ENCODE measurements at regions of chr1 and their contacts with region 1.

Region 1: DNA sequence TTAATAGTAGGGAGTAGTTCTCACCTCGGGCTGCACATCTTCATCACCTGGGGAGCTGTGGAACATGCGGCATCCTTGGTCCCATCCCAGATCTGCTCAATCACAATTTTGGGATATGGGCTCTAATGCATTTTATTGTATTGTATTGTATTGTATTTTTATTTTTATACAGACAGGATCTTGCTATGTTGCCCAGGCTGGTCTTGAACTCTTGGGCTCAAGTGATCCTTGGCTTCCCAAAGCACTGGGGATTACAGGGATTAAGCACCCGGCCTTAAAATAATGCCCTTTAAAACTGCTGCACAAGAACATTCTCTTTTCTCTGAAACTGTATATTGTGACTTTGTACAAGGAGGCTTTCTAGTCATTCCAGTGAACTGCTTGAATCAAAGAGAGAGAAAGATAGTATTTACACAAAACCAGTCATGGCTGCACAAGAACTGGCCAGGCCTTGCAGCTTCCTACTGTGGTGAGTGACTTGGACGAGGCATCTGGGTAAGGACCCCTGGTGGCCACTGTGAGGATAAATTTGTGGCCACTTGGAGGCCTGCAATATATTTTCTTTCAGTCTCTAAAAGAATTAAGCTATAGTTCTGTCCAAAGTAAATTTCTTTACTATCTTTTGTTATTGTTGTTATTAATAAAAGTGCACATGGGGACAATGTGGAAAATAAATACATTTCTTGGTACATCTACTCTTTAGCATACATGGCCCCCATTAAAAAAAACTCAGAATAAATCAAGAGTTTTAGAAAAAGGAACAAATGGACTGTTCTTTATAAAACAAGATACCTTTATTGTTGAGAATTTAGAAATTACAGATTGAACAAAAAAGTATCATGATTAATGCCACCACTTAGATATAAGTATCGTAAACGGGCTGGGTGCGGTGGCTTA is 48.0 kb downstream of the TBCE start:
- DNase-seq: peak; percentile 57
- H3K4me3 ChIP-seq: no peak overlapping the region
- H3K27ac ChIP-seq: no peak overlapping the region
- H3K27me3 ChIP-seq: no peaks in the 10 kb centered on the region
- CTCF ChIP-seq: peak; percentile 78

Region 2: DNA sequence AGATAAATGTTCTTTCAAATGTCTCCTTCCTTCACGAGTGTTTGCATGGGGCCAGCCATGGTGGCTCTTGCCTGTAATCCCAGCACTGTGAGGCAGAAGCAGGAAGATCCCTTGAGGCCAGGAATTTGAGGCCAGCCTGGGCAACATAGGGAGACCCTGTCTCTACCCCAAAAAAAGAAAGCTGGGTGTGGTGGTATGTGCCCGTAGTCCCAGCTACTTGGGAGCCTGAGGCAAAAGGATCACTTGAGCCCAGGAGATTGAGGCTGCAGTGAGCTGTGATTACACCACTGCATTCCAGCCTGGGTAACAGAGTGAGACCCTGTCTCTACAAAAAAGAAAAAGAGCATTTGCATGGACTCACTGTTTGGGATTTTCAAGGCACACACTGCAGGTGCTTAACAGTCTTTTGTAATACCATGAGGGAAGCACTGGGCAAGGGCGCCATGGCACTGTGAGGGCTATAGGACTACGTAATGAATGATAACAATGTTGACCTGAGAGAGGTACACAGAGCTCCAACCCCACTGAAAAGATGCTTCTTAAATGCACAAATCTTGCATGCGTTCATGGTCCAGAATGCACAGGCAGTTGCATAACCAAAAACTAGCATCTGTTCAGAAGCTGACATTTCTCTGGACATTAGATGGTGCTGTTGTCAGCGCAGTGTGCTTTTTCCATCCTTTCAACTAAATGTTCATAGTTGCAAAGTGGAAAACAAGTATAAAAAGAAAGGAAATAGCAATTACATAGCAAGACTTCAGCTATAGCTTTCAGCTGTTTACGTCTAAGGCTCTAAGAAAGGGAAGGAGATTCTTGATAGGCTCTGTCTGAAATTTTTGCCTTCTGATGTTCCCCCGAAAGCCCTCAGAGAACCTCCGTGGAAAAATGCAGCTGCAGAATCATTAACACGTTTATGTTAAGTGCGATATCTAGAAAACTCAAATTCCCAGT is 928.5 kb before region 1 on chr1:
- CTCF ChIA-PET with region 1: interaction called, 15 read pairs
- POLR2A ChIA-PET with region 1: no interaction called
- DNase-seq: peak; percentile 77
- H3K4me3 ChIP-seq: no peak overlapping the region
- H3K27ac ChIP-seq: peak overlapping the region; percentile 41
- H3K27me3 ChIP-seq: peaks cover 2% of the 10 kb centered on the region
- CTCF ChIP-seq: peak; percentile 81

Region 3: DNA sequence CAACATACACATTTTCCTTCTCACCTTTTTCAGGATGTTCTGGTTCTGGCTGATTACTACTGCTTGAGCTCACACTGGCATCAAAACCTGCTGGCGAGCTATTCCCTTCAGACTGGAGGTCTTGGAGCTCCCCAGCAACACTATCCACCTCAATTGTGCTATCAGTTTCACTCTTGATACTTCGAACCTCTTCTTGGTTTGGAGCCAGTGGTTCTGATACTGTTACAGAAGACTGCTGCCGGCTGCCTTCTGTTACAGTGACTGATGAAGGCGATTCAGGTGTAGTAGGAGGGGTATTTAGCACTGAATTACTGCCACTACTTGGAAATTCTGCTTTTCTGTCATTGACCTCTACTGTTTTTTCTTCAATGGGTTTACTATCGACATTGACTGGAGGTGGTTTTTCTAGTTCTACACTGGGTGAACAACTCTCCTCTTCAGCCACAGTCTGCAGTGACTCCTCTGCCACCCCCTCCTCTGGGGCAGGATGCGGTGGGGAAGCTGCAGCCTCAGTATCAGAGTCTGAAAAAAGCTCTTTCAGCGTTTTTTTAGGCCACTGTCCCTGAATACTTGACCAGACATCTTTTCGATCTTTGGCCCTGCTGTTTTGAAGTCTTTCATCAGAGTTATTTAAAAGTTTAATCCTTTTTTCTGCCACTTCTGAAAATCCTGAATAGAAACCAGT is 233.6 kb before region 1 on chr1:
- CTCF ChIA-PET with region 1: interaction called, 10 read pairs
- POLR2A ChIA-PET with region 1: no interaction called
- DNase-seq: no peak
- H3K4me3 ChIP-seq: no peak overlapping the region
- H3K27ac ChIP-seq: no peak overlapping the region
- H3K27me3 ChIP-seq: no peaks in the 10 kb centered on the region
- CTCF ChIP-seq: no peak

Region 4: GRCh38 chr1:235239851-235240250 is 175.4 kb before region 1 on chr1:
- CTCF ChIA-PET with region 1: interaction called, 30 read pairs
- POLR2A ChIA-PET with region 1: no interaction called
- DNase-seq: no peak
- H3K4me3 ChIP-seq: no peak overlapping the region
- H3K27ac ChIP-seq: no peak overlapping the region
- H3K27me3 ChIP-seq: no peaks in the 10 kb centered on the region
- CTCF ChIP-seq: no peak

Region 5: DNA sequence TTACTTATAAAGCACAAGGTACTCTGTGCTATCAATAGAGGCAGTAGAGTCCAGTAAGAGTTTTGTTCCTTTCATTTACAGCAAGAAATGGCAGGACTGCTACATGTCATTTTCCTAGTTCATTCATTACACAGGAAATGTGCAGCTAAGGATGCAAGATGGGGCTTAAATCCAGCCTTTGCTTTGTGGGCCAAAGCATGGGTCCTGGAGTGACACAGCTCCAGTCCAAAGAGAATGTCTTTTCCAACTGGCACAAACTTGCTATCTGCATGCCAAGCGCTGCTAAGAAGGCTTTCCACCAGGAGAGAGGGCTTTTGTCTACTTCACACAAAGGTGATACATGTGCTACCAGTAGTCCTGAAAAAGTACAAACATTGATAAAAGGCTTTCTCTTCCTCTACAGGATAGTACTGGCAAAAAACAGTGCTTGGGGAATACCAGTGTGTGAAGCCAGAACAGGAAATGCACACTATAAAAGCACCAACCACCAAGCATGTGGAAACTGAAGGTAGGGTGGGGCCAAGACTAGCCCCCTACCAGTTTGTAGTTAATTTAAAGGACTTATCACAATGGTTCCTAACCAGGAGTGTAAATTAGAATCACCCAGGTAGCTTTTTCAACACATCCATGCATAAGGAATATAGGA is 156.0 kb before region 1 on chr1:
- CTCF ChIA-PET with region 1: interaction called, 61 read pairs
- POLR2A ChIA-PET with region 1: no interaction called
- DNase-seq: no peak
- H3K4me3 ChIP-seq: no peak overlapping the region
- H3K27ac ChIP-seq: no peak overlapping the region
- H3K27me3 ChIP-seq: no peaks in the 10 kb centered on the region
- CTCF ChIP-seq: no peak

Region 6: DNA sequence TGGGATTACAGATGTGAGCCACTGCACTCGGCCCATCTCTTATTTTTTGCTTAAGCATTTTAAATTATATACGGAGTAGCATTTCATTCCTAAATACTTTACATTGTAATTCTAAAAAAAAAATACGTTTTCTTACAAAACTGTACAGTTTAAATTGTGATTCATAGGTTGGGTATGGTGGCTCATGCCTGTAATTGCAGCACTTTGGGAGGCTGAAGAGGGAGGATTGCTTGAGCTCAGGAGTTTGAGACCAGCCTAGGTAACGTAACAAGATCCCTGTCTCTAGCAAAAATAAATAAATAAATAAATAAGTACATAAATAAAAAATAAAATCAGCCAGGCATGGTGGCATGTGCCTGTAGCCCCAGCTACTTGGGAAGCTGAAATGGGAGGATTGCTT is 23.4 kb before region 1 on chr1:
- CTCF ChIA-PET with region 1: interaction called, 35 read pairs
- POLR2A ChIA-PET with region 1: interaction called, 5 read pairs
- DNase-seq: no peak
- H3K4me3 ChIP-seq: no peak overlapping the region
- H3K27ac ChIP-seq: no peak overlapping the region
- H3K27me3 ChIP-seq: no peaks in the 10 kb centered on the region
- CTCF ChIP-seq: no peak

Region 7: DNA sequence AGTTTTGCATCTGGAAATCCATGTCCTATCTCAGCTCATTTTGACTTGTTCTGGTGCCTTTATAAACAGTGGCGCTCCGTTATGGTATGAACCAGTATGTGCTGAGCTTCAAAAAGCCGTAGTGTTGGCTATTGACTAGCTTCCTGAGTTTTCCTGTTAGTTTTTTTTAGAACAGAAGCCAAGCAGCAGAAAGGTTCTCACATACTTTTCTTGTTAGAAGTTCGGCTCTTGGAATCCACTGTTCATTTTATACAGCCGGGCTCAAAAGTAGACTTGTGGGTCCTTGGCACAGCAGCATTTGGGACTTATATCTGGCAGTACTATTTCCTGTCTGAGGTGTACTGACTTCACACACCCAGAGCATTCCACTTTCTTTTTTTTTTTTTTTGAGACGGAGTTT is 15.7 kb after region 1 on chr1:
- CTCF ChIA-PET with region 1: interaction called, 34 read pairs
- POLR2A ChIA-PET with region 1: no interaction called
- DNase-seq: no peak
- H3K4me3 ChIP-seq: no peak overlapping the region
- H3K27ac ChIP-seq: no peak overlapping the region
- H3K27me3 ChIP-seq: no peaks in the 10 kb centered on the region
- CTCF ChIP-seq: no peak

Measured in AG04450 (cell line).